GM10248 (cell line): ENCODE measurements at regions of chr19 and their contacts with region 1.

Region 1: GRCh38 chr19:13808856-13809255 is 13.6 kb downstream of the ZSWIM4 start:
- DNase-seq: no peak
- CTCF ChIP-seq: no peak

Region 2: DNA sequence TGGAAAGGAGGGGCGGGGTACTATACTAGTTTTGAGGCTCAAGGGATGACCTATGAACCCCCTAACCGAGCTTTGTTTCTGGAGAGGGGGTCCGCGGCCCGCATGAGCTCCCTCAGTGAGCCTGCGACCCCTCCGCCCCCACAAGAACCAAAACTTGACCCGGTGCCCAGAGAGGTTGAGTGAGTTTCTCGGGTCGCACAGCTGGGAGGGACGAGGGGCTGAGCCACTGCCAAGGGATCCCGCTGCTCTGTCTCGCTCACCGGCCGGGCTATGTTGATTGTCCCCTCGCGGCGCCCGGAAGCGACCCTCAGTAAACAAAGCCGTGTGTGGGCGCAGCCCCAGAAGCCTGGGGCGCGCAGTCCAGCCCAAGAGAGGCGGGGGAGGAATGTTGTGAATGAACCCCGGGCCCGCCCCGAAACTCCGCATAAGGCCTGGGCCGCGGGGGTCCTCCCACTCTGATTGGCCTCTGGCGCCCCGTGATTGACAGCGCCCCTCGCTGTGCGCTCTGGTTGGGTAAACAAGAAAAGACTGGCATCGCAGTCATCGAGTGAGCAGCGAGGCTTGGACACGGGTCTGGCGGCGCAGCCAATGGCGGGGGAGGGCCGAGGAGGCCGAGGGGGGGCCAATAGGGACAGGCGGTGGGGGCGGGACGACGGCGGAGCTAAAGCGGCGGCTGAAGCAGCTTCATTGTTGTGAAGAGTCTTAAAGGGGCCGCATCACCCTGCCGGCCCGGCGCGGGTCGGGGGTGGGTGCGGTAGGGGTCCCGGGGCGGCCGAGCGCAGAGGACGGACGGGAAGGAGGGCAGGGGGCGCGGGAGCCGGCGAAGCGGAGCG is 13.9 kb before region 1 on chr19 and contains the start of gene ZSWIM4:
- CTCF ChIA-PET with region 1: interaction called, 13 read pairs
- POLR2A ChIA-PET with region 1: interaction called, 4 read pairs
- DNase-seq: peak; percentile 98
- CTCF ChIP-seq: no peak